ENCODE measurements at regions of chr17 and their contacts with region 1.

Region 1: GRCh38 chr17:8222630-8223356 is 12.4 kb upstream of the AURKB start:
- DNase-seq: peak; percentile 90 to 93 (median 93)
- H3K4me3 ChIP-seq: peak overlapping the region; percentile 74 to 96 (median 93)
- H3K4me3 Mint-ChIP-seq: peak overlapping the region; percentile 96 to 98
- H3K27ac ChIP-seq: peak overlapping the region; percentile 93 to 94
- H3K27ac Mint-ChIP-seq: peak overlapping the region; percentile 98 to 99 (median 98)
- H3K4me1 ChIP-seq: peaks cover 35 to 47% of the 10 kb centered on the region in 2 donors
- H3K4me1 Mint-ChIP-seq: peaks cover 48% of the 10 kb centered on the region
- H3K27me3 ChIP-seq: no peaks in the 10 kb centered on the region
- H3K27me3 Mint-ChIP-seq: peaks cover 0 to 5% (median 0%) of the 10 kb centered on the region in 3 donors
- CTCF ChIP-seq: no peak

Region 2: DNA sequence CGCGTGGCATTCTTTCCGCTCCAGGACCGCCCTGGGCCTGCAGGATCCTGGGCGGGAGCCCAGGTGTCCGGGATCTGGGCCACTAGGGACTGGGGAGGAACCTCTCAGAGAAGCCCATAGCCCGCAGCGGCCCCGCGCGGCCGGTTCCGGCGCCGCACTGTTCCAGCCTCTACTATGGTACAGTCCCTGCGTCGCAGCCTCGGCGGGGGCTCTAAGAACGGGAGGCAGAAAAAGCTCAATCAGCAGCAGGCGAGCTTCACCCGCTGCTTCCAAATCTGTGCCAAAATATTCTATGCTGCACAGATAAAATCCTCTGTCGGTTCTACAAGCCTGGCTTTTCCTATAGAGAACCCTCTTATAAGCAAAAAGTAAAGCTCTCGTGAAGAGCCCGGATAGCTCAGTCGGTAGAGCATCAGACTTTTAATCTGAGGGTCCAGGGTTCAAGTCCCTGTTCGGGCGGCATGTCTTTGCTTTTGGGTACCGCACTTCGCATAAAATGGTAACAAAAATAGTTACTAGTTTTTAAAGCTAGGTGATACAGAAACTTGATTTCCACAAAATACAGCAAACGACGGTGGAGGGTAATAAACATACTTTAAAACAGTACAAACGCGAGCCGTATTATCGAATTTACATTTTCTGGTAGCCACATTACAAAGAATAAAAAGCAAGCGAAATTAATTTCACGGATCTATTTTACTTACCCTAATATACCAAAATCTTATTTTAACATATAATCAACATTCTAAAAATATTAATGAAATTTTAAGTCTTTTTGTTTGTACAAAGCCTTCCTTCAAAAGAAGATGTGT is 103.8 kb before region 1 on chr17:
- intact Hi-C with region 1: loop called in 1 of 2 experiments (anchors 5 kb)
- DNase-seq: peak; percentile 60 to 85 (median 79)
- H3K4me3 ChIP-seq: peak overlapping the region; percentile 45 to 77 (median 61)
- H3K4me3 Mint-ChIP-seq: peak overlapping the region; percentile 85 to 93
- H3K27ac ChIP-seq: no peak overlapping the region
- H3K27ac Mint-ChIP-seq: peak overlapping the region; percentile 85 to 91 (median 87)
- H3K4me1 ChIP-seq: peaks cover 56 to 69% of the 10 kb centered on the region in 2 donors
- H3K4me1 Mint-ChIP-seq: peaks cover 61% of the 10 kb centered on the region
- H3K27me3 ChIP-seq: peaks cover 45 to 78% of the 10 kb centered on the region in 2 donors
- H3K27me3 Mint-ChIP-seq: peaks cover 73 to 91% (median 88%) of the 10 kb centered on the region in 3 donors
- CTCF ChIP-seq: peak; percentile 96

Region 3: GRCh38 chr17:8138672-8139371 is 84.0 kb before region 1 on chr17:
- intact Hi-C with region 1: loop called in 1 of 2 experiments (anchors 5 kb)
- DNase-seq: peak; percentile 88 to 93 (median 90)
- H3K4me3 ChIP-seq: peak overlapping the region; percentile 4 to 68 (median 21)
- H3K4me3 Mint-ChIP-seq: no peak overlapping the region
- H3K27ac ChIP-seq: peak overlapping the region; percentile 55 to 58
- H3K27ac Mint-ChIP-seq: no peak overlapping the region
- H3K4me1 ChIP-seq: peaks cover 34 to 40% of the 10 kb centered on the region in 2 donors
- H3K4me1 Mint-ChIP-seq: no peaks in the 10 kb centered on the region
- H3K27me3 ChIP-seq: peaks cover 0 to 10% of the 10 kb centered on the region in 2 donors
- H3K27me3 Mint-ChIP-seq: peaks cover 6 to 18% (median 11%) of the 10 kb centered on the region in 3 donors
- CTCF ChIP-seq: peak; percentile 94

Region 4: DNA sequence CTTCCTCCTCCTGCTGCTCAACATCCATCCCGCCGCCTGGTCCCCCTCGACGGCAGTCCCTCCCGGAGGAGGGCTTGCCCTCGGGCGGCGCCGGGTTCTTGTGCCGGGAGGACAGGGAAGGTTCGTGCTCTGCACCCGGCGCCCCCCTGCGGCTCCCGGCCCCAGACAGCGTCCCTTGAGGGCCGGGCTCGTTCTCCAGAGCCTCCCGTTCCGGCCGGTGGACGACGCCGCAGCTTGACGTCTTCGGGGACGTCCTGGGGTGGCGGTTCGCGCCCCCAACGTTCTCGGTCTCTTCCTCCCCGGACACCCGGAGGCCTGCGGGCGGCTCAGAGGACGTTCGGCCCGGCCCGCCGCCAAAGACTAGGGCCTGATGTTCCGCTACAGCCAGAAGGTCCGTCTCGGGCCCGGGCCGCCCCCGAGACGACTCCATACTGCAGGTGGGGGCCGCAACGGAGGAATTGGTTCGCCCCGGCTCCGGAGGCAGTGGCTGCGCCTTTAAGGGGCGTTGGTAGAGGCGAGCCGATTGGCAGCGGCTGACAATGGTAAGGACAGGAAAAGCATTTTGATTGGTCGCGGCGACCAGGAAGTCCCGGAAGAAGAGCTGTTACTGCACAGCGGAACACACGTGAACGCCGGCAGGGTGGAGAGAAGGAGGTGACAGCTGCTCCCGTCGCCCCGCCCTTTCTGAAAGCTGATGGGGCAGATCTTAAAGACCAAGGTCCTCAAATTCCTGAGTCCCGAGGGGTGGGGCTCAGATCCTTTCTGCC is 32.9 kb before region 1 on chr17 and contains the start of gene BORCS6:
- intact Hi-C with region 1: loop called (anchors 2 kb)
- DNase-seq: peak; percentile 96 to 98 (median 98)
- H3K4me3 ChIP-seq: peak within 1 kb of the TSS; percentile 82 to 90 (median 87)
- H3K4me3 Mint-ChIP-seq: no peak within 1 kb of the TSS
- H3K27ac ChIP-seq: peak within 1 kb of the TSS; percentile 78 to 89
- H3K27ac Mint-ChIP-seq: peak within 1 kb of the TSS in 6 of 7 donors; percentile 88 to 94 (median 92)
- H3K4me1 ChIP-seq: peaks cover 65 to 73% of the 10 kb centered on the region in 2 donors
- H3K4me1 Mint-ChIP-seq: peaks cover 9% of the 10 kb centered on the region
- H3K27me3 ChIP-seq: no peaks in the 10 kb centered on the region
- H3K27me3 Mint-ChIP-seq: peaks cover 0 to 5% (median under 1%) of the 10 kb centered on the region in 3 donors
- CTCF ChIP-seq: no peak
- polyA plus RNA-seq, gene BORCS6: 5.4 to 14.1 (median 13.9) TPM

Region 5: GRCh38 chr17:8248751-8249607 is 26.2 kb after region 1 on chr17 and contains the start of gene PFAS:
- intact Hi-C with region 1: loop called (anchors 1 to 2 kb)
- DNase-seq: peak; percentile 93 to 95 (median 95)
- H3K4me3 ChIP-seq: peak within 1 kb of the TSS; percentile 61 to 88 (median 61)
- H3K4me3 Mint-ChIP-seq: peak within 1 kb of the TSS; percentile 95 to 98
- H3K27ac ChIP-seq: peak within 1 kb of the TSS; percentile 94 to 95
- H3K27ac Mint-ChIP-seq: peak within 1 kb of the TSS; percentile 97 to 100 (median 99)
- H3K4me1 ChIP-seq: peaks cover 16 to 23% of the 10 kb centered on the region in 2 donors
- H3K4me1 Mint-ChIP-seq: peaks cover 32% of the 10 kb centered on the region
- H3K27me3 ChIP-seq: no peaks in the 10 kb centered on the region
- H3K27me3 Mint-ChIP-seq: no peaks in the 10 kb centered on the region
- CTCF ChIP-seq: no peak
- polyA plus RNA-seq, gene PFAS: 4.1 to 12.8 (median 4.4) TPM

Region 6: GRCh38 chr17:8294814-8295316 is 72.1 kb after region 1 on chr17:
- intact Hi-C with region 1: loop called in 1 of 2 experiments (anchors 2 kb)
- DNase-seq: no peak
- H3K4me3 ChIP-seq: peak overlapping the region; percentile 56 to 87 (median 80)
- H3K4me3 Mint-ChIP-seq: peak overlapping the region; percentile 82 to 95
- H3K27ac ChIP-seq: peak overlapping the region; percentile 80 to 89
- H3K27ac Mint-ChIP-seq: peak overlapping the region; percentile 82 to 96 (median 92)
- H3K4me1 ChIP-seq: peaks cover 28 to 32% of the 10 kb centered on the region in 2 donors
- H3K4me1 Mint-ChIP-seq: peaks cover 42% of the 10 kb centered on the region
- H3K27me3 ChIP-seq: no peaks in the 10 kb centered on the region
- H3K27me3 Mint-ChIP-seq: peaks cover 0 to 2% (median 0%) of the 10 kb centered on the region in 3 donors
- CTCF ChIP-seq: no peak

Region 7: GRCh38 chr17:8383143-8383822 is 160.5 kb after region 1 on chr17 and contains the start of gene RPL26:
- intact Hi-C with region 1: no loop called
- DNase-seq: peak; percentile 96 to 99 (median 97)
- H3K4me3 ChIP-seq: peak within 1 kb of the TSS; percentile 72 to 89 (median 74)
- H3K4me3 Mint-ChIP-seq: peak within 1 kb of the TSS; percentile 95 to 98
- H3K27ac ChIP-seq: peak within 1 kb of the TSS; percentile 60 to 79
- H3K27ac Mint-ChIP-seq: peak within 1 kb of the TSS; percentile 89 to 95 (median 93)
- H3K4me1 ChIP-seq: peaks cover 28 to 34% of the 10 kb centered on the region in 2 donors
- H3K4me1 Mint-ChIP-seq: peaks cover 34% of the 10 kb centered on the region
- H3K27me3 ChIP-seq: no peaks in the 10 kb centered on the region
- H3K27me3 Mint-ChIP-seq: no peaks in the 10 kb centered on the region
- CTCF ChIP-seq: peak; percentile 100
- polyA plus RNA-seq, gene RPL26: 859 to 4,469 (median 884) TPM